Psoas muscle (tissue), 8 donors: ENCODE measurements at regions of chr11 and their contacts with region 1.

Region 1: DNA sequence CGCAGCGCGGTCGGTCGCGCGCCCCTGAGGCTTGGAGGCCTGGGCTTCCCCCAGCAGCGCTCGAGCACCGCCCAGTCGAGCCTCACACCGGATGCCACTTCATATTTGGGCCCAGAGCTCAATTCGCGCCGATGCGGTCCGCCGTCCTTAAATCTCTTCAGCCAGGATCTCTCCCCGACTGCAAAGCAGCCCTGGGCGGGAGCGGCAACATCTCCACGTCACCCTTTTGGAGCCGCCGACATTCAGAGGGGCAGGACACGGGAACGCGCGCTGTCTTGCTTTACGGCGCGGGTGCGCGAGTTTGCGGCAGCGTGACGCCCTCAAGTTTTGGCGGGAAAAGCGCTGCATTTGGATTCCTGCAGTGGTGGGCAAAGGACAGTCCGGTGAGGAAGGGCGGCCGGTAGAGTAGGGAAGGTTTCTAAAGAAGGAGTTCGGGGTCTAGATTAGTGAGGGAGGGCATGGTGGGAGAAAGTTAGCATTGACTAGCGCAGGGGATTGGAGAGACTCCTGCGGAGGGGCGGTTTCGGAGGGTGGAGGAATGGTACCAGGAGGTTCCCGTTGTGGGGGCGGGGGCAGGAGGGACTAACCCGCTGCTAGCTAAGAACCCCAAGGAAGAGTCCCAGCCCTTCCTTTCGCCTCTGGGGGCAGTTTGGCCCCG is 796 bp downstream of the CHEK1 start:
- DNase-seq: peak; percentile 86 to 93
- ATAC-seq: peak; percentile 92 to 97 (median 94)
- H3K4me3 ChIP-seq: peak overlapping the region; percentile 85
- H3K27ac ChIP-seq: peak overlapping the region; percentile 97
- H3K4me1 ChIP-seq: peaks cover 13% of the 10 kb centered on the region
- H3K27me3 ChIP-seq: no peaks in the 10 kb centered on the region
- CTCF ChIP-seq: no peak

Region 2: DNA sequence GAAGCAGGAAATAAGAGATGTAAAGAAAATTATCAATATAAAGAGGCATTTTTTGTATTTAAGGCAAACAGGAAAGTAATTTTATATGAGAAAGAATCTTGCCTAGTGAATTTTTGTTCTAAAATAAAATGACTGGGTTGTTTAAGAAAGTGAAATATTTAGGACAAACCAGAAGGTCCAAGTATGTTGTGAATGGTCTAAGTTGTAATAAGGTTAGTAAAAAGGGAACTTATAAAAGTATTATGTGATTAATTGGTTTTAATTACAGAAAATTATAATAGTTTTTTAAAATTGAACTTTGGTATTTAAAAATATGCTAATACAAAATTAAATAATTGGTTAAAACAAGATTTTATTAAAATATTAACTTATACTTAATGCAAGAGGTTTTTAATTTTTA is 83.0 kb before region 1 on chr11:
- intact Hi-C with region 1: no loop called
- DNase-seq: no peak
- ATAC-seq: no peak
- H3K4me3 ChIP-seq: no peak overlapping the region
- H3K27ac ChIP-seq: no peak overlapping the region
- H3K4me1 ChIP-seq: no peaks in the 10 kb centered on the region
- H3K27me3 ChIP-seq: no peaks in the 10 kb centered on the region
- CTCF ChIP-seq: no peak

Region 3: GRCh38 chr11:125568970-125569914 is 56.5 kb before region 1 on chr11 and contains the start of gene EI24:
- intact Hi-C with region 1: loop called (anchors 5 to 10 kb)
- DNase-seq: peak; percentile 94 to 95
- ATAC-seq: peak; percentile 96
- H3K4me3 ChIP-seq: peak within 1 kb of the TSS; percentile 96
- H3K27ac ChIP-seq: peak within 1 kb of the TSS; percentile 98
- H3K4me1 ChIP-seq: peaks cover 21% of the 10 kb centered on the region
- H3K27me3 ChIP-seq: no peaks in the 10 kb centered on the region
- CTCF ChIP-seq: peak; percentile 76
- total RNA-seq, gene EI24: 52.9 to 140 (median 93.6) TPM

Region 4: GRCh38 chr11:125592305-125593112 is 33.2 kb before region 1 on chr11 and contains the start of gene STT3A:
- intact Hi-C with region 1: loop called (anchors 2 to 5 kb)
- DNase-seq: peak; percentile 100
- ATAC-seq: peak; percentile 97 to 99 (median 98)
- H3K4me3 ChIP-seq: peak within 1 kb of the TSS; percentile 70
- H3K27ac ChIP-seq: peak within 1 kb of the TSS; percentile 96
- H3K4me1 ChIP-seq: peaks cover 20% of the 10 kb centered on the region
- H3K27me3 ChIP-seq: no peaks in the 10 kb centered on the region
- CTCF ChIP-seq: no peak
- total RNA-seq, gene STT3A: 27.2 to 33.1 (median 31.0) TPM

Region 5: DNA sequence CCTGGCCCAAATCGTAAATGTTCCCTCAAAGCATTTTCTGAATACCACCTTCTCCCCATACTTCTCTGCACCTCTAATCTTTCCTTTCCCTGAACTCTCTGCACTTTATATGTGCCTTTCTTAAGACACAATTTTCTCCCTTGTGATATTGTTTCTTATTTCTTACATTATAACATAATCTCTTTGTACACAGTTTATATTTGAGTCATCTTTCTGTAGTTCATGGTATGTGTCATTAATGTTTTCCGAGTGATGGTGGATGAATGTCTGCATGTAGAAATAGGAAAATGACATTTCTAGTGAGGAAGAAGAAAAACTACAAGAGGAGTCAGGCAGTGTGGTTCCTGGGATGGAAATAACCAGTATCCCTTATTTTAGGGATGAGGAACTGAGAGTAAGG is 49.4 kb after region 1 on chr11:
- intact Hi-C with region 1: no loop called
- DNase-seq: no peak
- ATAC-seq: no peak
- H3K4me3 ChIP-seq: no peak overlapping the region
- H3K27ac ChIP-seq: no peak overlapping the region
- H3K4me1 ChIP-seq: no peaks in the 10 kb centered on the region
- H3K27me3 ChIP-seq: no peaks in the 10 kb centered on the region
- CTCF ChIP-seq: no peak

Region 6: GRCh38 chr11:125835748-125836147 is 210.0 kb after region 1 on chr11:
- intact Hi-C with region 1: no loop called
- DNase-seq: no peak
- ATAC-seq: no peak
- H3K4me3 ChIP-seq: no peak overlapping the region
- H3K27ac ChIP-seq: no peak overlapping the region
- H3K4me1 ChIP-seq: no peaks in the 10 kb centered on the region
- H3K27me3 ChIP-seq: no peaks in the 10 kb centered on the region
- CTCF ChIP-seq: no peak

Region 7: DNA sequence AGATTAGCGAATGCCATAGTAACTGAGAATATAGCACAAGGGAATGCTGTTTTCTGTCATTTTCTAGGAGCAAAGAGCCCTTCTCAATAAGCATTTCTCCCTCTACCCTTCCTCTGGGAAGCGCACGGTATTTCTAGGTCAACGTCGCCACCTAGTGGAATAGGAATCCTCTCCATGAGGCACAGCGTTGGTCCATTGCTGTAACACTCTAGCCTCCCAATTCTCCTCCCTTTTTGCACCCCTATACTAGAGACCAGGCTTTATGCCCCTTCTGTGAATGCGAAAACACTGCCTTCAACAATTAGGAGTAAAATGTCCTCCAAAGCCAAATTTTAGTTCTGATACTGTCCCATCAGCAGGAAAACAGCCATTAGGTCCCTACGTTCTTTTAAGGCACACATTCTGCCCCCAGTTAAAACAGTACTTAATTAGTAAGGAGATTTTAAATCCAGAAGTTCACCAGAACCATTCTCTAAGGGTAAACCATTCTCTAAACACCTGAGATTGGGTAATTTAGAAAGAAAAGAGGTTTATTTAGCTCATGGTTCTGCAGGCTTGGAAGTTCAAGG is 248.9 kb after region 1 on chr11:
- intact Hi-C with region 1: loop called in 1 of 2 experiments (anchors 5 kb)
- DNase-seq: no peak
- ATAC-seq: peak; percentile 71 to 86 (median 84)
- H3K4me3 ChIP-seq: no peak overlapping the region
- H3K27ac ChIP-seq: no peak overlapping the region
- H3K4me1 ChIP-seq: no peaks in the 10 kb centered on the region
- H3K27me3 ChIP-seq: no peaks in the 10 kb centered on the region
- CTCF ChIP-seq: peak; percentile 68

Region 8: DNA sequence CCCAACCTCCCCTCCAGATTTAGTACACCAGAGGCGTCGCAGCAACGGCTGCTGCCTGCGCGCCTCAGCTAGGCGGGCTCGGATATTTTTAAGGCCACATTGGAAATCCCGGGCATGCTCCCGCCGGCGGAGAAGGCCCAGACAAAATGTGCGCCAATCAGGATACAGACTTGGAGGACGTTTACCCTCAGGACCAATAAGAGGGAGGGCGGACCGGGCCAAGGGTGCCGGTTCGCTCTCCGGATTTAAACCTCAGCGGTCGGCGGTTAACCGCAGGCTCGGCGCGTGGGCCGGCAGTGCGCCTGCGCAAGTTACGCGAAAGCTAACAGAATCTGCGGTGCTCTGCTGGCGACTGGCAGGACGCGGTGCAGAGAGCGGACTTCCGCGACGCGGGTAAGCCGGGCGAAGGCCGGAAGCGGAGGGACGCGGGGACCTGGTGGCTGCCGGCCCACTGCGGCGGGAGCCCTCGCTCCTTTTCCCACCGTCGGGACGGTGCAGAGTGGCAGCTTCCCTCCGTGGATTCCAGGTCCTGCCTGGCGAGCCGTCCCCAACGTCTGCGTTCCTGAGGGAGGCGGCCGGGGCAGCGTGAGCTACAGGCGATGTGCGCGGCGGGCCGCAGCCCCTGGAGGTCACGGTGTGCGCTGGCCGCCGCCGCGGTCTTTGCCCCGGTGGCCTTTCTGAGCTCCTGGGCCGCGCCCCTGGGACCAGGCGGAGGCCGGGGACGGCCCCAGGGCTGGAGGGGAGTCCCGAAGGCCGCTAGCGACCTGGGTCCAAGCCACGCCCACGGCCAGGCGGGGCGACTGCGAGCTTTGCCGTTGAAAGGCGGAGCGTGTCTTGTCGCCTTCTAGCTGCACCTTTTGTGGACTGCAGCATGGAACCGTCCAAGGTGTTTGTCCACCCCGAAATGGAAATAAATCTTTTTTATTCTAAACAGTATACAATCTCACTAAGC is 261.9 kb after region 1 on chr11 and contains the start of gene HYLS1:
- intact Hi-C with region 1: loop called in 1 of 2 experiments (anchors 5 kb)
- DNase-seq: peak; percentile 95 to 96
- ATAC-seq: peak; percentile 98 to 99 (median 99)
- H3K4me3 ChIP-seq: peak within 1 kb of the TSS; percentile 88
- H3K27ac ChIP-seq: peak within 1 kb of the TSS; percentile 93
- H3K4me1 ChIP-seq: peaks cover 8% of the 10 kb centered on the region
- H3K27me3 ChIP-seq: no peaks in the 10 kb centered on the region
- CTCF ChIP-seq: peak; percentile 21
- total RNA-seq, gene HYLS1: 1.8 to 4.0 (median 3.1) TPM

Region 9: GRCh38 chr11:126202646-126203359 is 577.0 kb after region 1 on chr11:
- intact Hi-C with region 1: loop called in 1 of 2 experiments (anchors 10 kb)
- DNase-seq: no peak
- ATAC-seq: peak in 3 of 4 donors; percentile 18 to 31 (median 23)
- H3K4me3 ChIP-seq: peak overlapping the region; percentile 33
- H3K27ac ChIP-seq: peak overlapping the region; percentile 79
- H3K4me1 ChIP-seq: peaks cover 67% of the 10 kb centered on the region
- H3K27me3 ChIP-seq: no peaks in the 10 kb centered on the region
- CTCF ChIP-seq: no peak